ENCODE measurements at regions of chr7 and their contacts with region 1.

Region 1: DNA sequence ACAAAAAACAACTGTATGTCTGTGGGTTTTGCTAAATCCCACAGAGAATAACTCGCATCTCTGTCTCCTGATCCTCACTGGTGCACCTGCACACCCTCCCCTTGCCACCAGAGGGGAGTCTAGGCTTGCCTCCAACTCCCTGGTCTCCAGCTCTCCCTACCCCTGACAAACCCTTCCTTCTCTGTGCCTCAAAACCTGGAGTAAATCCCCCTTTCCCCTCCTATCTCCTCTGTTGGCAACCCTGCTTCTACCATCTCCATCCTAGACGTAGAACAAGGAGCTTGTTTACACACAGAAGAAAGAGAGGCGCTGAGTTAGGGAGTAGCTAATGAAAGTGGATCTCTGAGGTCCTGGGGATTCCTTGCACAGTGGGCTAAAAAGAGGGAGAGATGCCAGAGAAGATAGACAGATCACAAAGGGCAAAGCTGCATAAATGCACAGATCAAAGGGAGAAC is 6.0 kb downstream of the MBLAC1 start:
- DNase-seq: peak; percentile 28 to 81 (median 71)
- ATAC-seq: peak; percentile 77
- H3K4me3 ChIP-seq: no peak overlapping the region
- H3K4me3 Mint-ChIP-seq: no peak overlapping the region
- H3K27ac ChIP-seq: no peak overlapping the region
- H3K27ac Mint-ChIP-seq: no peak overlapping the region
- H3K4me1 ChIP-seq: peaks cover 14% of the 10 kb centered on the region
- H3K4me1 Mint-ChIP-seq: peaks cover 16% of the 10 kb centered on the region
- H3K27me3 ChIP-seq: no peaks in the 10 kb centered on the region
- H3K27me3 Mint-ChIP-seq: no peaks in the 10 kb centered on the region
- CTCF ChIP-seq: peak; percentile 87

Region 2: DNA sequence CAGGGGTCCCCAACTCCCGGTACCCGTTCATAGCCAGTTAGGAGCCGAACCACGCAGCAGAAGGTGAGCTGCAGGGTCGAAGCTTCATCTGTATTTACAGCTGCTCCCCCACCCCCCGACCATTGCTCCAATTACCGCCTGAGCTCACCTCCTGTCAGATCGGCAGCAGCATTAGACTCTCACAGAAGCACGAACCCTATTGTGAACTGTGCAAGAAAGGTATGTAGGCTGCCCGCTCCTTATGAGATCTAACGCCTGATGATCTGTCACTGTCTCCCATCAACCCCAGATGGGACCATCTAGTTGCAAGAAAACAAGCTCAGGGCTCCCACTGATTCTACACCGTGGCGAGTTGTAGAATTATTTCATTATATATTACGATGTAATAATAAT is 142.3 kb before region 1 on chr7:
- CTCF ChIA-PET with region 1: interaction called, 48 read pairs
- POLR2A ChIA-PET with region 1: interaction called, 3 read pairs
- intact Hi-C with region 1: loop called (anchors 1 to 2 kb)
- DNase-seq: no peak
- ATAC-seq: no peak
- H3K4me3 ChIP-seq: no peak overlapping the region
- H3K4me3 Mint-ChIP-seq: no peak overlapping the region
- H3K27ac ChIP-seq: no peak overlapping the region
- H3K27ac Mint-ChIP-seq: no peak overlapping the region
- H3K4me1 ChIP-seq: no peaks in the 10 kb centered on the region
- H3K4me1 Mint-ChIP-seq: peaks cover 3% of the 10 kb centered on the region
- H3K27me3 ChIP-seq: no peaks in the 10 kb centered on the region
- H3K27me3 Mint-ChIP-seq: peaks cover 4% of the 10 kb centered on the region
- CTCF ChIP-seq: no peak

Region 3: GRCh38 chr7:100101016-100101862 is 31.5 kb before region 1 on chr7 and contains the starts of genes AP4M1 and MCM7:
- CTCF ChIA-PET with region 1: interaction called, 18 read pairs
- POLR2A ChIA-PET with region 1: interaction called, 7 read pairs
- intact Hi-C with region 1: loop called (anchors 1 kb)
- DNase-seq: peak; percentile 88 to 98 (median 96)
- ATAC-seq: peak; percentile 83
- H3K4me3 ChIP-seq: peak within 1 kb of the TSS; percentile 91 to 98
- H3K4me3 Mint-ChIP-seq: peak within 1 kb of the TSS; percentile 95
- H3K27ac ChIP-seq: peak within 1 kb of the TSS; percentile 80 to 89
- H3K27ac Mint-ChIP-seq: peak within 1 kb of the TSS; percentile 97
- H3K4me1 ChIP-seq: peaks cover 27% of the 10 kb centered on the region
- H3K4me1 Mint-ChIP-seq: peaks cover 41% of the 10 kb centered on the region
- H3K27me3 ChIP-seq: no peaks in the 10 kb centered on the region
- H3K27me3 Mint-ChIP-seq: no peaks in the 10 kb centered on the region
- CTCF ChIP-seq: no peak
- total RNA-seq, gene AP4M1: 2.8 to 3.9 TPM
- total RNA-seq, gene MCM7: 63.7 to 64.6 TPM

Region 4: GRCh38 chr7:100148559-100149350 is 16.0 kb after region 1 on chr7 and contains the start of gene LAMTOR4:
- CTCF ChIA-PET with region 1: interaction called, 19 read pairs
- POLR2A ChIA-PET with region 1: interaction called, 8 read pairs
- intact Hi-C with region 1: loop called in 1 of 2 experiments (anchors 1 kb)
- DNase-seq: peak; percentile 94 to 100 (median 97)
- ATAC-seq: peak; percentile 95
- H3K4me3 ChIP-seq: peak within 1 kb of the TSS; percentile 71 to 82
- H3K4me3 Mint-ChIP-seq: peak within 1 kb of the TSS; percentile 97
- H3K27ac ChIP-seq: peak within 1 kb of the TSS; percentile 73 to 95
- H3K27ac Mint-ChIP-seq: peak within 1 kb of the TSS; percentile 97
- H3K4me1 ChIP-seq: peaks cover 23% of the 10 kb centered on the region
- H3K4me1 Mint-ChIP-seq: peaks cover 38% of the 10 kb centered on the region
- H3K27me3 ChIP-seq: no peaks in the 10 kb centered on the region
- H3K27me3 Mint-ChIP-seq: no peaks in the 10 kb centered on the region
- CTCF ChIP-seq: no peak
- total RNA-seq, gene LAMTOR4: 68.4 to 83.1 TPM

Region 5: GRCh38 chr7:100177045-100178001 is 44.6 kb after region 1 on chr7 and contains the starts of genes GPC2 and STAG3:
- CTCF ChIA-PET with region 1: interaction called, 15 read pairs
- POLR2A ChIA-PET with region 1: interaction called, 3 read pairs
- intact Hi-C with region 1: loop called in 1 of 2 experiments (anchors 5 kb)
- DNase-seq: peak; percentile 89 to 98 (median 97)
- ATAC-seq: peak; percentile 92
- H3K4me3 ChIP-seq: peak within 1 kb of the TSS; percentile 52 to 61
- H3K4me3 Mint-ChIP-seq: peak within 1 kb of the TSS; percentile 74
- H3K27ac ChIP-seq: peak within 1 kb of the TSS in 1 of 2 experiments; percentile 6
- H3K27ac Mint-ChIP-seq: peak within 1 kb of the TSS; percentile 80
- H3K4me1 ChIP-seq: peaks cover 33% of the 10 kb centered on the region
- H3K4me1 Mint-ChIP-seq: peaks cover 43% of the 10 kb centered on the region
- H3K27me3 ChIP-seq: peaks cover 0 to under 1% of the 10 kb centered on the region in 2 experiments
- H3K27me3 Mint-ChIP-seq: no peaks in the 10 kb centered on the region
- CTCF ChIP-seq: no peak
- total RNA-seq, gene GPC2: 10.5 to 13.3 TPM
- total RNA-seq, gene STAG3: 6.3 to 6.6 TPM

Region 6: GRCh38 chr7:100208911-100209408 is 76.2 kb after region 1 on chr7:
- CTCF ChIA-PET with region 1: interaction called, 25 read pairs
- POLR2A ChIA-PET with region 1: interaction called, 3 read pairs
- intact Hi-C with region 1: no loop called
- DNase-seq: peak in 3 of 9 experiments; percentile 27 to 56 (median 43)
- ATAC-seq: peak; percentile 32
- H3K4me3 ChIP-seq: no peak overlapping the region
- H3K4me3 Mint-ChIP-seq: peak overlapping the region; percentile 13
- H3K27ac ChIP-seq: no peak overlapping the region
- H3K27ac Mint-ChIP-seq: peak overlapping the region; percentile 66
- H3K4me1 ChIP-seq: peaks cover 55% of the 10 kb centered on the region
- H3K4me1 Mint-ChIP-seq: peaks cover 53% of the 10 kb centered on the region
- H3K27me3 ChIP-seq: no peaks in the 10 kb centered on the region
- H3K27me3 Mint-ChIP-seq: no peaks in the 10 kb centered on the region
- CTCF ChIP-seq: no peak

Region 7: DNA sequence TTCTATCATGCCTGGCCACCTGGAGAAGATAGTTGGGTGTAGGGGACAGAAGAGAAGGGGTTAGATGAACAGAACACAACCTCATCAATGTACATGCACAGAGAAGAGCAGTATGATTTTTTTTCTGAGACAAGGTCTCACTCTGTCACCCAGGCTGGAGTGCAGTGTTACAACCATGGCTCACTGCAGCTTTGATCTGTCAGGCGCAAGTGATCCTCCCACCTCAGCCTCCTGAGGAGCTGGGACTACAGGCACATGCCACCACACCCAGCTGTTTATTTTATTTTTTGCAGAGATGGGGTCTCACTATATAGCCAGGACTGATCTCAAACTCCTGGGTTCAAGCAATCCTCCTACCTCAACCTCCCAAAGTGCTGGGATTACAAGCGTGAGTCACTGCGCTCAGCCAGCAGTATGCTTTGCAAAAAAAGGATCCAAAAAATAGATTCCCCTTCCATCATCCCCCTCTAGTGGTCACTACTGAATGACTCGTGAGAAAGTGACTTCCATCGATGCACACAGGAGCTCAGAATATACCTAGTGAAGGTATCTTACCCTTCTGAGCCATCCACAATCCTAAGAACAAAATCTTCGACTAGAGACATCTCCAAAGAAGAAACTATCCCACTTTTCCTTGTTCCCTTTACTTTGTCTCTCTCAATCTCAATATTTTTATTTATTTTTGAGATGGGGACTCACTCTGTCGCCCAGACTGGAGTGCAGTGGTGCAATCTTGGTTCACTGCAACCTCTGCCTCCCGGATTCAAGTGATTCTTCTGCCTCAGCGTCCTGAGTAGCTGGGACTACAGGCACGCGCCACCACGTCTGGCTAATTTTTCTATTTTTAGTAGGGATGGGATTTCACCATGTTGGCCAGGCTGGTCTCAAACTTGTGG is 274.8 kb after region 1 on chr7:
- CTCF ChIA-PET with region 1: interaction called, 18 read pairs
- POLR2A ChIA-PET with region 1: no interaction called
- intact Hi-C with region 1: loop called in 1 of 2 experiments (anchors 1 kb)
- DNase-seq: peak in 6 of 9 experiments; percentile 9 to 84 (median 38)
- ATAC-seq: peak; percentile 99
- H3K4me3 ChIP-seq: no peak overlapping the region
- H3K4me3 Mint-ChIP-seq: no peak overlapping the region
- H3K27ac ChIP-seq: no peak overlapping the region
- H3K27ac Mint-ChIP-seq: no peak overlapping the region
- H3K4me1 ChIP-seq: no peaks in the 10 kb centered on the region
- H3K4me1 Mint-ChIP-seq: peaks cover 6% of the 10 kb centered on the region
- H3K27me3 ChIP-seq: no peaks in the 10 kb centered on the region
- H3K27me3 Mint-ChIP-seq: no peaks in the 10 kb centered on the region
- CTCF ChIP-seq: peak; percentile 77

Region 8: DNA sequence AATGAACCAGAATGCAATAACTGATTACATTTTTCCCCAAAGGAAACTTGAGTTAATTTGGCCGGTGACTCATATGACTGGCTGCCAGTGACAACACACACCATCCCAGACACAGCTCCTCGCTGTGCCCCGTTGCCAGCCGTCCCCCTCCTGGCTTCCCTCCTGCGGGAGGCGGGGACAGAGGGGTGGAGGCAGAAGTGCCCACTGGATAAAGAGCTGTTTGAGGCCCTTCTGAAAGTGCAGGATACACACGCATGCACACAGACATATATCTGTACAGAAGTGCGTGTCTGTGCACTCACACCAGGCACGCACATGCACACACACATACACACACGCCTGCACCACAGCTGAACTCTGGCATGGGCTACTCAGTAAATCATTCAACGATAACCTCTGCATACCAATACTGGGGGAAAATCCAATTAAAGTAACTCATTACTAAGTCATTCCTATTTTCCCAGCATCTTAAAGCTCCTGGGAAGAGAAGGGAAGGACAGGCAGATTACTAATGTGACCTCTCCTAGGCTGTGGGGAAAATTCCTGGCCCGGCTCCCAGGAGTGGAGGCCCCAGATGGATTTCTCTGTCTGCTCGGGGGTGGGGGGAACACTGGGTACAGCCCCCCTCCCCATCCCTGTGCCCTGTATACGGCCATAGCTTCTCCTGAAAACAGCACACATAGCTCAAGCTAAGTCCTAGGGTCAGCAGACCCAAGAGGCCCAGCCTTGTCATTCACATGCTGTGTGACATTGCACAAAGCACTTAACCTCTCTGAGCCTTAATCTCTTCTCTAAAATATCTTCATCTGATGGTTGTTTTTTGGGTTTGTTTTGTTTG is 1548.7 kb after region 1 on chr7:
- CTCF ChIA-PET with region 1: no interaction called
- POLR2A ChIA-PET with region 1: no interaction called
- intact Hi-C with region 1: no loop called
- DNase-seq: no peak
- ATAC-seq: no peak
- H3K4me3 ChIP-seq: no peak overlapping the region
- H3K4me3 Mint-ChIP-seq: no peak overlapping the region
- H3K27ac ChIP-seq: no peak overlapping the region
- H3K27ac Mint-ChIP-seq: no peak overlapping the region
- H3K4me1 ChIP-seq: no peaks in the 10 kb centered on the region
- H3K4me1 Mint-ChIP-seq: no peaks in the 10 kb centered on the region
- H3K27me3 ChIP-seq: no peaks in the 10 kb centered on the region
- H3K27me3 Mint-ChIP-seq: no peaks in the 10 kb centered on the region
- CTCF ChIP-seq: no peak